Right cardiac atrium (tissue), 5 donors: ENCODE measurements at regions of chr12 and their contacts with region 1.

Region 1: DNA sequence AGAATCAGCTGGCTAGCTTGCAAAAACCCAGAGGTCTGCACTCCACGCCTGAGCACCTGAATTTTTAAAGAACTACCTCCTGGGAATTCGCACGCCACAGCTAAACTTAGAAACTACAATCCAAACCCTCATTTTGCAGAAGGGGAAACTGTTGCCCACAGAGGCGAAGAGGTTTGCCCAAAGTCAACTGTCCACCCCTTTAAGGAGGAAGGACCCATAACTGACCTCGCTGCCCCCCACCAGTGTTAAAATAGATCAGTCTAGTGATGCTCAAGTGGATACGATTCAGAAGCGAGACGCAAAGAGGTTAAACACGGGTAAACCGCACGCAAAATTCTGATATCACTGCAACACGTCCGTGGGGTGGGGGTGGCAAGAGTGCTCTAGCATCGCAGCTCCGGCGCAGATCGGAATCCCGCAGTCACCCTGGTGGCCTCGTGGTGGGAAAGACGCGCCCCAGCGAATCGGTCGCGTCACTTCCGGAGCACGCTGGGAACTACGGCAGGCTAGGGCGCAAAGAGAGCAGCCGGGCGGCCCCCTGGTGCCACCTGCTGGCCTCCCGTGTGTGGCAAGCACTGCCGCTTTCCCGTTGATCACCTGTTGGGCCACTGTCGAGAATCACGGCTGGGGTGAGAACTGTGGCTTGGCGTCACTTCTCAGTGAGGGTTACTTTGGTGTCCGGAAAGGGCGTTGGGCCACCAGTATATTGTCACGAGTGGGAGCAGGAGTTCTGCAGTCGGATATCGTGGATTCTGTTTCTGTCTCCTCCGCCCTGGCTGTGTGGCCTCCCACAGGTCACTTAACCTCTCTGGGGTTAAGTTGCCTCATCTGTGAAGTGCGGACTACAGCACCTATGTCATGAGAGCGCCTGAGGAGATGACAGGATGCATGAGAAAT is at the start of gene ALKBH2:
- DNase-seq: peak; percentile 95 to 98 (median 97)
- ATAC-seq: peak; percentile 78 to 82
- H3K4me3 ChIP-seq: peak within 1 kb of the TSS; percentile 66
- H3K27ac ChIP-seq: peak within 1 kb of the TSS; percentile 16
- H3K4me1 ChIP-seq: peaks cover 3% of the 10 kb centered on the region
- H3K27me3 ChIP-seq: no peaks in the 10 kb centered on the region
- total RNA-seq, gene ALKBH2: 7.4 to 12.2 (median 7.6) TPM

Region 2: GRCh38 chr12:108633534-108634248 is 459.6 kb before region 1 on chr12 and contains the start of gene SELPLG:
- intact Hi-C with region 1: loop called in 1 of 4 experiments (anchors 10 kb)
- DNase-seq: peak; percentile 51 to 85 (median 84)
- ATAC-seq: peak; percentile 36 to 44
- H3K4me3 ChIP-seq: no peak within 1 kb of the TSS
- H3K27ac ChIP-seq: no peak within 1 kb of the TSS
- H3K4me1 ChIP-seq: peaks cover 7% of the 10 kb centered on the region
- H3K27me3 ChIP-seq: no peaks in the 10 kb centered on the region
- total RNA-seq, gene SELPLG: 2.9 to 6.2 (median 4.7) TPM